CD4-positive, alpha-beta memory T cell (primary cell): ENCODE measurements at regions of chr1 and their contacts with region 1.

Region 1: GRCh38 chr1:203673550-203674427 is 47.2 kb downstream of the ATP2B4 start:
- DNase-seq: peak; percentile 84 to 94 (median 88)
- H3K4me3 ChIP-seq: peak overlapping the region in 1 of 2 donors; percentile 30
- H3K4me3 Mint-ChIP-seq: peak overlapping the region; percentile 78 to 93 (median 84)
- H3K27ac ChIP-seq: peak overlapping the region; percentile 65
- H3K27ac Mint-ChIP-seq: peak overlapping the region; percentile 93 to 99 (median 98)
- H3K4me1 ChIP-seq: peaks cover 82% of the 10 kb centered on the region
- H3K4me1 Mint-ChIP-seq: peaks cover 56 to 92% (median 77%) of the 10 kb centered on the region in 4 donors
- H3K27me3 ChIP-seq: no peaks in the 10 kb centered on the region
- H3K27me3 Mint-ChIP-seq: no peaks in the 10 kb centered on the region

Region 2: DNA sequence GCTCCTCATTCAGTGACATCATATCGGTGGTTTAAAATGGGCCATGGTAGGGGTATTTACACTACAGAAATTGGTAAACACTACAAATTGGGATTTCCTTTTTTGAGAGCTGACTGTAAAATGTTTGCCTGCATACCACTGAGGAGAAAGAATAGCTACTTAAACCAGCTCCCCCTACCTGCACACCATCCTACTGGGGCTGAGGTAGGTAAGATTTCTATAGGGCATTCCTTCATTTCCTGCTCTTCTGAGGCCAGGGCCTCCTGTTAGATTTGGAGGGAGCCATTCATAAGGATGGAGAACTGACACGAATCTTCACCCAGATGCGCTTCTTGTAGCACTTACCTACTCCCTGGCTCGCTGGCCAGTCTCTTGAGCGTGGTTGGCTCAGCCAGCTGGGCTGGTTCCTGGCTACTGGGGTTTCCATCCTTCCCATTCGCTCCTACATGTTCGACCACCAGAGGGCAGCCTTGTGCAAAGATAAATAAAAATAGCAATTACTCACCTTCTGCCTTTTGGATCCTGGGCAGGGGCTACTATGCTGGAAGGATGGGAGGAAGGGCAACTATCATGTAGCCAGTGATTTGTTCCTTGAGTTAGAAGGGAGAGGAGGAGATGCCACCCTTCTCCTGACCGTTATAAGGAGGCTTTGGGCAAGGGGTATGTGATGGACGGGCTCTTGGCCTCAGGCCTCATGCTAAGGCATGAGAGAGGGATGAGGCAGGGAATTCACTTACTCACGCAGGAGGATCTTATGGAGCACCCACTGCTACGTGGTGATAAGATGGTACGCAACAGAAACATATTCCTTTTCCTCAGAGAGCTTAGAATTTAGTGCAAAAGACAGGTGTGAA is 169.2 kb before region 1 on chr1:
- CTCF ChIA-PET with region 1: interaction called, 14 read pairs
- POLR2A ChIA-PET with region 1: no interaction called
- intact Hi-C with region 1: no loop called
- DNase-seq: peak; percentile 60 to 70 (median 63)
- H3K4me3 ChIP-seq: no peak overlapping the region
- H3K4me3 Mint-ChIP-seq: no peak overlapping the region
- H3K27ac ChIP-seq: no peak overlapping the region
- H3K27ac Mint-ChIP-seq: peak overlapping the region in 1 of 7 donors; percentile 3
- H3K4me1 ChIP-seq: no peaks in the 10 kb centered on the region
- H3K4me1 Mint-ChIP-seq: peaks cover 0 to 7% (median 4%) of the 10 kb centered on the region in 4 donors
- H3K27me3 ChIP-seq: no peaks in the 10 kb centered on the region
- H3K27me3 Mint-ChIP-seq: no peaks in the 10 kb centered on the region

Region 3: DNA sequence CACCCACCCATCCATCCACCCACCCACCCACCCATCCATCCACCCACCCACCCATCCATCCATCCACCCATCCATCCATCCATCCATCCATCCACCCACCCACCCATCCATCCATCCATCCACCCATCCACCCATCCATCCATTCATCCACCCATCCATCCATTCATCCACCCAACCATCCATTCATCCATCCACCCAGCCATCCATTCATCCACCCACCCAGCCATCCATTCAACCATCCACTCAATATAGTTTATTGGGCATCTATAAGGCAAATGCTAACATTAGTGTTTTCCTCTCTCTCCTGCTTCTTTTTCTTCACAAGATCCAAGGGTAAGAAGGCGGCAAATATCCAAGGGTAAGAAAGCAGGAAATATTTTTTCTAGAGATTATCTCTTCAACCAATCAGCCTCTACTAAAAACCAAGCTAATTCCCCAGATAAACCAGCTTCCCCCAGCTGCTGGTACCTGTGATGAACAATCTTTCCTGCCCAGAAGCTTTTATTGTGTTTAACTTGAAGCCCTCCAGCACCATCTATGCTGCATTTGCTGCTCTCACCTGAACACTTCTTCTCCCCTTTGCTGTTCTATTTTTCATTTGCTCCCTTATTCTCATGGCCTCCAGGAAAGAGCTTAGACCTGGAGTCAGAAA is 69.7 kb before region 1 on chr1:
- CTCF ChIA-PET with region 1: interaction called, 5 read pairs
- POLR2A ChIA-PET with region 1: interaction called, 14 read pairs
- intact Hi-C with region 1: loop called (anchors 1 kb)
- DNase-seq: no peak
- H3K4me3 ChIP-seq: no peak overlapping the region
- H3K4me3 Mint-ChIP-seq: peak overlapping the region in 1 of 8 donors; percentile 37
- H3K27ac ChIP-seq: no peak overlapping the region
- H3K27ac Mint-ChIP-seq: peak overlapping the region in 5 of 7 donors; percentile 23 to 69 (median 61)
- H3K4me1 ChIP-seq: peaks cover 49% of the 10 kb centered on the region
- H3K4me1 Mint-ChIP-seq: peaks cover 33 to 55% (median 42%) of the 10 kb centered on the region in 4 donors
- H3K27me3 ChIP-seq: no peaks in the 10 kb centered on the region
- H3K27me3 Mint-ChIP-seq: no peaks in the 10 kb centered on the region

Region 4: DNA sequence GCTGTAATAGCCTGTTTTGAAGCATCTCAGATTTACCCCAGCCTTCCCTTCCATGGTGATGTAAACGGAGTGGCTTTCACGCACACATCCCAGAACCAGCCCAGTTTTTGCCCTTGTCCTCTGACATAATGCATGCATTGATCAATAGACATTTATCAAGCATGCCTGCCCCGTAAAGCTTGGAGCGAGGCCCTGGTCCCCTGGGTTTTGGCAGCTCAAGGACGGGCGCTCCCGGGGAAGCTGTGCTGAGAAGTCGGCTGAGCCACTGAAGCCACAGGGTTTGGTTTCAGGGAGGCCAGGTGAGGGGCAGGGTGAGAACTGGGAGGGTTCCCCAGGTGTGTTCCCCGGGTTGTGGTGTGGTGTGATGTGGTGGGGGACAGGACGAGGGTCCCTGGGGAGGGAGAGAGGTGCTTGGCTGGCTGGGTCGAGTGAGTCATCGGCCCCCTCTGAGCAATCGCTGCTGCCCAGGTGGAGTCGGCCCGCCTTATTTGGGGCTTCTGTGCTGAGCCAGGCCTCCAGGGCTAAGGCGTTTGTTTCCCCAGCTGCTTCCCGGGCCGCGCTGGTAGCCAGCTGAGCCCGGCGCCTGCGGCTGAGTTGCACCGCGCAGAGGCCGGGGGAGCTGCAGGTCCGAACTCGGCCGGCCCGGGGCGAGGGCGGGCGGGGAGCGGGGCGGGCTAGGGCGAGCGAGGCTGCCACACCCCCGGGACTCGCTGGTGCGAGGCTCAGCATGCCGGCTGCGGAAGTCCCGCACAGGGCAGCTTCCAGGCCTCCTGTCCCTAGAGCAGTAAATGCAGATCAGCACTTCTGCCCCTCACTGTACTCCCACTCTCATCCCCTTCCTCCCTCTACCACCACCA is 23.6 kb before region 1 on chr1:
- CTCF ChIA-PET with region 1: interaction called, 78 read pairs
- POLR2A ChIA-PET with region 1: interaction called, 61 read pairs
- intact Hi-C with region 1: loop called (anchors 1 kb)
- DNase-seq: peak; percentile 59 to 95 (median 67)
- H3K4me3 ChIP-seq: peak overlapping the region; percentile 13 to 54
- H3K4me3 Mint-ChIP-seq: peak overlapping the region; percentile 82 to 93 (median 88)
- H3K27ac ChIP-seq: peak overlapping the region; percentile 78
- H3K27ac Mint-ChIP-seq: peak overlapping the region; percentile 96 to 99 (median 98)
- H3K4me1 ChIP-seq: peaks cover 74% of the 10 kb centered on the region
- H3K4me1 Mint-ChIP-seq: peaks cover 50 to 81% (median 68%) of the 10 kb centered on the region in 4 donors
- H3K27me3 ChIP-seq: no peaks in the 10 kb centered on the region
- H3K27me3 Mint-ChIP-seq: no peaks in the 10 kb centered on the region

Region 5: GRCh38 chr1:203663294-203663693 is 10.5 kb before region 1 on chr1:
- CTCF ChIA-PET with region 1: interaction called, 10 read pairs
- POLR2A ChIA-PET with region 1: interaction called, 25 read pairs
- intact Hi-C with region 1: no loop called
- DNase-seq: peak in 1 of 5 donors; percentile 52
- H3K4me3 ChIP-seq: no peak overlapping the region
- H3K4me3 Mint-ChIP-seq: peak overlapping the region in 7 of 8 donors; percentile 43 to 74 (median 69)
- H3K27ac ChIP-seq: peak overlapping the region; percentile 33
- H3K27ac Mint-ChIP-seq: peak overlapping the region; percentile 79 to 95 (median 85)
- H3K4me1 ChIP-seq: peaks cover 74% of the 10 kb centered on the region
- H3K4me1 Mint-ChIP-seq: peaks cover 56 to 79% (median 68%) of the 10 kb centered on the region in 4 donors
- H3K27me3 ChIP-seq: no peaks in the 10 kb centered on the region
- H3K27me3 Mint-ChIP-seq: no peaks in the 10 kb centered on the region

Region 6: GRCh38 chr1:203702130-203702577 is 28.4 kb after region 1 on chr1:
- CTCF ChIA-PET with region 1: interaction called, 67 read pairs
- POLR2A ChIA-PET with region 1: interaction called, 10 read pairs
- intact Hi-C with region 1: loop called (anchors 1 kb)
- DNase-seq: peak; percentile 46 to 68 (median 57)
- H3K4me3 ChIP-seq: no peak overlapping the region
- H3K4me3 Mint-ChIP-seq: no peak overlapping the region
- H3K27ac ChIP-seq: no peak overlapping the region
- H3K27ac Mint-ChIP-seq: peak overlapping the region; percentile 26 to 97 (median 89)
- H3K4me1 ChIP-seq: peaks cover 3% of the 10 kb centered on the region
- H3K4me1 Mint-ChIP-seq: peaks cover 5 to 15% (median 10%) of the 10 kb centered on the region in 4 donors
- H3K27me3 ChIP-seq: no peaks in the 10 kb centered on the region
- H3K27me3 Mint-ChIP-seq: no peaks in the 10 kb centered on the region